ENCODE measurements at regions of chr14 and their contacts with region 1.

Region 1: DNA sequence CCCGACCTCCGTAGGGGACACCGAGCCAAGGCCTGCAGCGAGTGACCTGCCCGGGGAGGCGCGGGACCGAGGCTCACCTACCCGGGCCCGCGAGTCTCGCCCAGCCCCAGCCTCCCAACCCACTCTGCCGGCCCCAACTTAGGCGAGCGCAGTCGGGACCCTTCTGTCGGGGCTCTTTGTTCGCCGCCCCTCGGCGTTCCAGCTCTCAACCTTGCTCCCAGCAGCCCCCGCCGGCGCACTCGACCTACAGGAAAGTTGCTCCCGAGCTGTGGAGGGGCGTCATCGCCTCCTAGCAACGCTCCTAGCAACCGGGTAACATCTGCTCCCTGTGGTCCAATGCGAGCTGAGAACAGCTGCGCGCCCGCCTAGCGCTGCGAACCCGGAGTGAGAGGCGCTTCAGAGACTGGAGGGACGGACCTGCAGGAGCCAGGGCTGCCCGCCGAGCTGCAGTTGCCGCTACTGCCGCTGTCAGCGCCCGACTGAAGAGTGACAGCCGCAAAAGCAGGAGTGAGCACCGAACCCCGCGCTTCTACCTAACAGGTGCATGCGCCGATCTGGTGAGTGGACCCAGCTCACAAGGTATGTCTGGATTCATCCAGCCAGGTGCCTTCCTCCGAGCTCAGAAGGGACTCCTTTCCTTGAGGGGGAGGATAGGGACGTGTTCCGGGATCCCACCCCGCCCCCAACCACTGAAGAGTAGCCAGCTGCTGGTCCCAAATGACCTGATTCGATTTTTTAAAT is 355.0 kb downstream of the SNAPC1 start:
- DNase-seq: peak; percentile 64 to 98 (median 89)

Region 2: GRCh38 chr14:61822458-61822857 is 294.7 kb before region 1 on chr14:
- intact Hi-C with region 1: no loop called
- DNase-seq: no peak

Region 3: DNA sequence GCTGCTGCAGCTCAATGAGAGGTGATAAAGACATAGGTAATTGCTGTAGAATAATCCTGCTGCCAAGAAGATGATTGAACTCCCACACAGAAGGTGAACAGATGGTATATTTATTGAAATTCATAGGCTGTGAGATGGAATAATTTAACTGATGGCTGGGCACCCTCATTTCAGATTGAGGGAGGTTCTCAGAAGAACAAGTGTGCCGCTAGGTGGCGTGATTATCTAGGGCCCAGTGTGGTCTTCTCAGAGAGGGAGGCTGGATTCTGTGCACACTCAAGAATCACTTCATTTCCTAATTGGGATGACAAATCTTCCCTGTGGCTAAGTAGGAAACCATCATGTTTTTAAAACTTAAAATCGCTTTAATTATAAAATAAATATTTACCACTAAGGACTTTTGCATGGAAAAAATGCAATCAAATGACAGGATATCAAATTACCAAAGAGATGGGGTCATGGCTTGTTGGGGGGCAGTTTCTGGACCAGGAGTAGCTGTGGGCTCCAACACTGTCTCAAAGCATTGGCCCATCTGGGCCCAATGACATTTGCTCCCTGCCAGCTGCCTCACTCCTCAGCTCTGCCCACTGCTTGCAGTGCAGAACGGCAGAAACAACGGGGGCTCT is 222.6 kb before region 1 on chr14:
- intact Hi-C with region 1: loop called (anchors 5 kb)
- DNase-seq: peak; percentile 35 to 93 (median 72)

Measured in posterior cingulate gyrus (tissue), 11 donors.